ENCODE measurements at regions of chr12 and their contacts with region 1.

Region 1: DNA sequence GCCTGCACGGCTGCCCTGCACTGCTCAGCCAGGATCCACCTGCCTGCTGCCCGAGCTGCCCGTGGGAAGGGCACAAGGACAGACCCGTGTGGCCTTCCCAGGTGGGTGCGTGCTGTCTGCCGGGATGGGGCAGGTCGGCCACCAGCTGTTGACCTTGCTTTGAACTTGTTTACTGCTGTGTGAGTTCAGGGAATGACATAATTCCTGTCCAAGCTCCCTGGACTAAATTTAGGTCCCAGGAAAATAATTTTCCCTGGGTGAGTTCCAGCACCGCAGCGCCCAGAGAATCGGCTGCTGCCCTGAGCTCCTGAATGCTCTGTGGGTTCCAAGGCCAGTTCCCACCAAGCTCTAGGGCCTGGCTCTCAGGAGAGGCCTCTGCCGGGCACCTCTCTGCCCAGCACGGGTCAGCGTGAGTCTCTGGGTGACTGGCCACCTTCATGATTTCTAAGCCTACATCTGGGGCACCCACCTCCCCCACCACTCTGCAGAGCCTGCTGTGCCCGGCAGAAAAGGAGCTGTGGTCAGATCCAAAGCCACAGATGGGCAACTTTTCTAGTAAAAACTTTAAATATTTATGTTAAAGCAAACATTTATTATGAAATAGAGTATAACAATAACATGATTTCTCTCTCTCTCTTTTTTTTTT is 27.2 kb upstream of the MLXIP start:
- DNase-seq: peak; percentile 85 to 89
- ATAC-seq: peak; percentile 87 to 89
- H3K4me3 ChIP-seq: peak overlapping the region in 2 of 4 donors; percentile 13 to 36
- H3K27ac ChIP-seq: peak overlapping the region; percentile 77 to 95 (median 92)
- H3K4me1 ChIP-seq: peaks cover 32 to 38% of the 10 kb centered on the region in 2 donors
- H3K27me3 ChIP-seq: no peaks in the 10 kb centered on the region
- CTCF ChIP-seq: no peak
- POLR2A ChIP-seq: peak in 1 of 2 donors; percentile 22

Region 2: GRCh38 chr12:121227300-121227699 is 824.1 kb before region 1 on chr12:
- in situ Hi-C with region 1: no loop called
- intact Hi-C with region 1: no loop called
- DNase-seq: no peak
- ATAC-seq: no peak
- H3K4me3 ChIP-seq: no peak overlapping the region
- H3K27ac ChIP-seq: no peak overlapping the region
- H3K4me1 ChIP-seq: no peaks in the 10 kb centered on the region
- H3K27me3 ChIP-seq: no peaks in the 10 kb centered on the region
- CTCF ChIP-seq: no peak
- POLR2A ChIP-seq: no peak

Region 3: GRCh38 chr12:121933522-121934308 is 117.6 kb before region 1 on chr12:
- in situ Hi-C with region 1: no loop called
- intact Hi-C with region 1: no loop called
- DNase-seq: no peak
- ATAC-seq: no peak
- H3K4me3 ChIP-seq: no peak overlapping the region
- H3K27ac ChIP-seq: no peak overlapping the region
- H3K4me1 ChIP-seq: no peaks in the 10 kb centered on the region
- H3K27me3 ChIP-seq: no peaks in the 10 kb centered on the region
- CTCF ChIP-seq: no peak
- POLR2A ChIP-seq: no peak

Region 4: GRCh38 chr12:122123051-122123760 is 71.9 kb after region 1 on chr12:
- in situ Hi-C with region 1: loop called (anchors 5 kb)
- intact Hi-C with region 1: loop called (anchors 1 kb)
- DNase-seq: peak; percentile 53 to 72
- ATAC-seq: peak; percentile 39 to 54
- H3K4me3 ChIP-seq: peak overlapping the region in 1 of 4 donors; percentile 6
- H3K27ac ChIP-seq: peak overlapping the region; percentile 80 to 97 (median 94)
- H3K4me1 ChIP-seq: peaks cover 61 to 69% of the 10 kb centered on the region in 2 donors
- H3K27me3 ChIP-seq: no peaks in the 10 kb centered on the region
- CTCF ChIP-seq: peak; percentile 78 to 93 (median 84)
- POLR2A ChIP-seq: no peak

Region 5: GRCh38 chr12:122917504-122918121 is 866.3 kb after region 1 on chr12:
- in situ Hi-C with region 1: no loop called
- intact Hi-C with region 1: no loop called
- DNase-seq: peak; percentile 29 to 43
- ATAC-seq: peak; percentile 86 to 94
- H3K4me3 ChIP-seq: no peak overlapping the region
- H3K27ac ChIP-seq: peak overlapping the region; percentile 5 to 55 (median 32)
- H3K4me1 ChIP-seq: peaks cover 11 to 13% of the 10 kb centered on the region in 2 donors
- H3K27me3 ChIP-seq: no peaks in the 10 kb centered on the region
- CTCF ChIP-seq: no peak
- POLR2A ChIP-seq: no peak

Measured in gastrocnemius medialis (tissue), 4 donors.